Panc1 (cell line): ENCODE measurements at regions of chr21 and their contacts with region 1.

Region 1: DNA sequence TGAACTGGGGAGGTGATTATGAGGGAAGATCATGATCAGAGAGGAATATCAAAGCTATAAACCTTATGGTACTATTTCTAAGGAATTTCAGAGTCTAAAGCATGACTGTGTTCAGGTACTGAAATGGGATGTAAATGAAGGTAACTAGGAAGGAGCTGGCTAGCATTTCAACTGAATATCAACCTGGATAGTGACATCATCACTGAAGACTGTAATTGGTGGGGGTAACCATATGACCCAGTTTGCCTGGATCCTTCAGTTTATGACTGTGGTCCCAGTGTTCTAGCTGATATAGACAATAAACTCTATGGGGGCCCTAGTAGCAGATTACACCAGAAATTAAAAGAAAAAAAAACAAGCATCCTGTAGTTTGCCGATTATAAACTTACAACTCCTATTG is 120.8 kb downstream of the APP start:
- DNase-seq: no peak
- ATAC-seq: no peak
- H3K4me3 ChIP-seq: no peak overlapping the region
- H3K27ac ChIP-seq: no peak overlapping the region
- H3K4me1 ChIP-seq: peaks cover under 1% of the 10 kb centered on the region; the same call in 1 of the 2 replicates
- H3K27me3 ChIP-seq: no peaks in the 10 kb centered on the region
- CTCF ChIP-seq: no peak

Region 2: GRCh38 chr21:26007951-26008498 is 41.8 kb before region 1 on chr21:
- CTCF ChIA-PET with region 1: no interaction called
- POLR2A ChIA-PET with region 1: no interaction called
- in situ Hi-C with region 1: no loop called
- intact Hi-C with region 1: no loop called
- DNase-seq: no peak
- ATAC-seq: no peak
- H3K4me3 ChIP-seq: no peak overlapping the region
- H3K27ac ChIP-seq: no peak overlapping the region
- H3K4me1 ChIP-seq: no peaks in the 10 kb centered on the region; the same call in 1 of the 2 replicates
- H3K27me3 ChIP-seq: no peaks in the 10 kb centered on the region
- CTCF ChIP-seq: no peak

Region 3: DNA sequence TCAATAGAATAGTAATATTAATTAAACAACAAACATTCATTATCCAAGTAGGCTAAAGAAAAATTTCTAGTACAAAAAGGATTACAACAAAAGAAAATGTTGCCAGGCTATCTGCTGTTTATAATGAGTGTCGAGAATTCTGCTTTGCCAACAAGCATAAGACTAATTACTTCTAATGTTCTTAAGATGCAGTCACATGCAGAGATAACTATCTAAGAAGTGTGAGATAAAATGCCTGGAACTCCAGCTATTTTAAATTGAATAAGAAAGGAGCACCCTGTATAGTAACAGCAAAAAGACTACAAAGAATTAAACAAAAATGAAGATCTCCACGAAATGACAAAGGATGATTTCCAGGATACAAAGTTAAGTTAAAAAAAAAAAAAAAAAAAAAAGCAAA is 60.9 kb after region 1 on chr21:
- CTCF ChIA-PET with region 1: no interaction called
- POLR2A ChIA-PET with region 1: interaction called, 19 read pairs
- in situ Hi-C with region 1: no loop called
- intact Hi-C with region 1: no loop called
- DNase-seq: no peak
- ATAC-seq: no peak
- H3K4me3 ChIP-seq: no peak overlapping the region
- H3K27ac ChIP-seq: no peak overlapping the region
- H3K4me1 ChIP-seq: peaks cover 4% of the 10 kb centered on the region
- H3K27me3 ChIP-seq: no peaks in the 10 kb centered on the region
- CTCF ChIP-seq: no peak

Region 4: DNA sequence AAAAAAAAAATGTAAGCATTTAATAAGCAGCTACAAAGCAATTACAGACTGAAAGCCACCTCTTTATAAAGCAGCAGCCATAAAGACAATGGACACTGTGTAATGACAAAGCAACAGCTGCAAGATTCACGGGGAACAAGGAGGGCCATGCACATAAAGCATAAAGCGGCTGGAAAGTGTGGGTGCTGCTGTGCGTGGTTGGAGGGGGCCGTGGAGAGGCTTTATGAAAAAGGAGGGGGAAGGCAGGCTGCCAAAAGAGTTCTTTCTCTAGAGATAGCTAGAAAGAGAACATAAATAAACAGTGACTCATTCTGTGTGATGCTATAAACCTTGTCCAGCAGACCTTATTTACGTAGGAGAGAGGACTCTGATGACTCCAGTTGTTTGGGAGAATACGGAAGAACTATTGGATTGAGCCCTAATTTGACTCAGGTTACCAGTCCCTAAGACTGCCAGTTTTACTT is 746.1 kb after region 1 on chr21:
- CTCF ChIA-PET with region 1: no interaction called
- POLR2A ChIA-PET with region 1: no interaction called
- in situ Hi-C with region 1: no loop called
- intact Hi-C with region 1: no loop called
- DNase-seq: no peak
- ATAC-seq: no peak; the same call in 1 of the 2 replicates
- H3K4me3 ChIP-seq: no peak overlapping the region
- H3K27ac ChIP-seq: no peak overlapping the region
- H3K4me1 ChIP-seq: no peaks in the 10 kb centered on the region
- H3K27me3 ChIP-seq: no peaks in the 10 kb centered on the region
- CTCF ChIP-seq: no peak